CD8-positive, alpha-beta memory T cell (primary cell): ENCODE measurements at regions of chr2 and their contacts with region 1.

Region 1: GRCh38 chr2:199979832-199980628 is 24.6 kb downstream of the MAIP1 start:
- DNase-seq: peak; percentile 53 to 81 (median 73)
- H3K4me3 ChIP-seq: no peak overlapping the region
- H3K4me3 Mint-ChIP-seq: no peak overlapping the region
- H3K27ac ChIP-seq: no peak overlapping the region
- H3K27ac Mint-ChIP-seq: peak overlapping the region in 1 of 8 donors; percentile 83
- H3K4me1 ChIP-seq: no peaks in the 10 kb centered on the region
- H3K4me1 Mint-ChIP-seq: peaks cover 2 to 6% (median 5%) of the 10 kb centered on the region in 3 donors
- H3K27me3 ChIP-seq: no peaks in the 10 kb centered on the region
- H3K27me3 Mint-ChIP-seq: no peaks in the 10 kb centered on the region

Region 2: GRCh38 chr2:200026332-200027230 is 46.6 kb after region 1 on chr2:
- CTCF ChIA-PET with region 1: no interaction called
- POLR2A ChIA-PET with region 1: no interaction called
- DNase-seq: no peak
- H3K4me3 ChIP-seq: no peak overlapping the region
- H3K4me3 Mint-ChIP-seq: no peak overlapping the region
- H3K27ac ChIP-seq: no peak overlapping the region
- H3K27ac Mint-ChIP-seq: no peak overlapping the region
- H3K4me1 ChIP-seq: no peaks in the 10 kb centered on the region
- H3K4me1 Mint-ChIP-seq: no peaks in the 10 kb centered on the region
- H3K27me3 ChIP-seq: no peaks in the 10 kb centered on the region
- H3K27me3 Mint-ChIP-seq: peaks cover 11 to 42% of the 10 kb centered on the region in 2 donors

Region 3: GRCh38 chr2:200471324-200471848 is 491.4 kb after region 1 on chr2:
- CTCF ChIA-PET with region 1: interaction called, 17 read pairs
- POLR2A ChIA-PET with region 1: no interaction called
- DNase-seq: peak; percentile 19 to 56 (median 32)
- H3K4me3 ChIP-seq: no peak overlapping the region
- H3K4me3 Mint-ChIP-seq: peak overlapping the region in 3 of 7 donors; percentile 13 to 72 (median 70)
- H3K27ac ChIP-seq: no peak overlapping the region
- H3K27ac Mint-ChIP-seq: peak overlapping the region in 6 of 8 donors; percentile 0 to 94 (median 82)
- H3K4me1 ChIP-seq: peaks cover 31% of the 10 kb centered on the region
- H3K4me1 Mint-ChIP-seq: peaks cover 33 to 37% (median 36%) of the 10 kb centered on the region in 3 donors
- H3K27me3 ChIP-seq: no peaks in the 10 kb centered on the region
- H3K27me3 Mint-ChIP-seq: no peaks in the 10 kb centered on the region